ENCODE measurements at regions of chr6 and their contacts with region 1.

Region 1: DNA sequence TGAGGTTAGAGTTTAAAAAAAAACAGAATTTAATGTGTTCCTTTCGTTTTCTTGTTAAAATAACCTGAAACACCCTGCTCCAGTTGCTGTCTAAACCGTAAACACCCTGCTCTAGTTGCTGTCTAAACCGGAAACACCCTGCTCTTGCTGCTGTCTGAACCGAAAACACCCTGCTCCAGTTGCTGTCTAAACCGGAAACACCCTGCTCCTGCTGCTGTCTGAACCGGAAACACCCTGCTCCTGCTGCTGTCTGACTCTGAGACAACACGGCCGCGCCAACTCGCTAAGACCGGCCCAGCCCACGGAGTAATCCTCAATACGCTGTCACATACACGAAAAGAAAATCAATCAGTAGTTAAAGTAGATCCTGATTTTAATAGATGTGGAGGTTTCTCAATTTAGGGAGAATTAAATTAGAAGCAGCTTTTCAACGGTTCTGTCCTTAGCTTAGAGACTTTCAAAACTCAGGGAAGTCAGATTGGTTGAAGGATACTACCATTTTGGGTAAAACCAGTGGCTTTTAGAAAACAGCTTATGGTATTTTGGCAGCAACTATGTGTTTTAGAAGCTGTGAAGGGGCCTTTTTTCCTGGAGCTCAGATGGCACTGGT is 98.3 kb downstream of the RAMACL start:
- DNase-seq: peak; percentile 63
- H3K4me3 Mint-ChIP-seq: peak overlapping the region; percentile 51
- H3K27ac Mint-ChIP-seq: peak overlapping the region; percentile 88
- H3K4me1 Mint-ChIP-seq: peaks cover 14% of the 10 kb centered on the region
- H3K27me3 Mint-ChIP-seq: peaks cover 1% of the 10 kb centered on the region

Region 2: GRCh38 chr6:166540631-166541331 is 52.6 kb after region 1 on chr6:
- intact Hi-C with region 1: loop called (anchors 1 kb)
- DNase-seq: peak; percentile 39
- H3K4me3 Mint-ChIP-seq: peak overlapping the region; percentile 72
- H3K27ac Mint-ChIP-seq: peak overlapping the region; percentile 86
- H3K4me1 Mint-ChIP-seq: peaks cover 26% of the 10 kb centered on the region
- H3K27me3 Mint-ChIP-seq: peaks cover 5% of the 10 kb centered on the region

Measured in activated T-helper 1 cell treated with anti-CD3 and anti-CD28 coated beads, Interleukin-12 subunit alpha, Interleukin-12 subunit beta, Interleukin-2, Interleukin-4 antibody, amounts not matched to agents 30 ng/mL and 10 ng/mL and 1 ng/mL, durations not matched to agents 14 hours and 24 hours and 36 hours (primary cell).